Right ventricle myocardium inferior (tissue), 1 donor: ENCODE measurements at regions of chr20 and their contacts with region 1.

Region 1: DNA sequence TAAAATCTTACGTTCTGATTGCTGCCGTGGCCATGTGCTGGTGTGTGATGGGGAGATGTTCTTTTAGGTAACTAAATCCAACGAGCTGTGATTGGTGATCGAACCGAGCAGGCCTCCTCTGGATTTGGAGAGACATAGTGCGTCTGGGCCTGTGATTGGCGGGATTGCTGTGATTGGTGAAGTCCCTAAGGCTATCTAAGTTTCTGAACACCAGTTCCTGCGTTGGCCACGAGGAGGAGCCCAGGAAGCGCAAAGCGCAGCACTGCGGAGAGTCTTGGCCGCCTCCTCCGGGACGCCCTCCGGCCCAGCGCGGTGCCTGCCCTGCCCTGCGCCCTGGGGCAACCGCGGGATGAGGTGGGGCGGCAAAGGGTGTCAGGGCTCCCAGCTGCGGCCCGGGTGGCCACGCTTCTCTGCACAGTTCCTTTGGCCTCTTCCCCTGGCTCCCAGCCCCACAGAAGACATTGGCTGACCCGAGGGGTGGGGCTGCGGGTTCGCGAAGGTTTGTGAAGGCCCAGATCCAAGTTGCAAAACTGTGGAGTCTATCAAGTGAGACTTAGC is 33.0 kb downstream of the HNF4A start:
- DNase-seq: peak; percentile 77
- ATAC-seq: peak; percentile 66

Region 2: GRCh38 chr20:44204155-44204831 is 184.3 kb before region 1 on chr20:
- intact Hi-C with region 1: no loop called
- DNase-seq: no peak
- ATAC-seq: peak; percentile 53

Region 3: DNA sequence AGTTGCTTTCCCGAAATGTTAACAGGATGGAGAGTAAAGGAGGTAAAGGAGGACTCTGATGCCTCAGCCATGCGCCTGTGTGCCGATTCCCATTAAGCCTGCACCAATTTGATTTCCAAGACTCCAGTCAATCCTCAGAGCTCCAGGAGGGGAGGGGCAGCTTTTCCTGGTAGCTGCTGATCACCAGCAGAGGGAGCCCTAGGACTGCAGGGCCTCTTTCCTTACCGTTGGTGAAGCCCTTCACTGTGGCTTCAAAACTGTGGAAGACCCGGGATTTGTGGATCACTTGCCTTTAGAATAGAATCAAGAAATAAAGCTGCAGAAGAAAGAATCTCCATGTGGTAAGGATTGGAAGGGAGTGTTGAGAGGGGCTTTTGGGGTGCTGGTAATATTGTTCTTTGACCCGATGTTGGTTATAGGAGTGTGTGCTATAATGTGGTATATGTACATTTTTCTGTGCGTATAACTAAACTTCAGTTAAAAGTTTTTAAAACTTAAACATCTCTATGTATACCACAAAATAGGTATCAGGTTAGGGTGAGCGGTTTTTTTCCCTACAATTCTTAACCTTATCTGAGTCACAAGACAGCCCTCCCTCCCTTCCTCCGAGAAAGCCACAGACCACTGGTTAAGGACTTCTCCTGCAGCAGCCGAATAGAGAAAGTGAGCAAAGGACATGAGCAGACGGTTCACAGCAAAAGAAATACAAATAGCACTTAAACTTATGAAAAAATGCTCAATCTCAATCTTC is 171.0 kb before region 1 on chr20:
- intact Hi-C with region 1: loop called (anchors 1 kb)
- DNase-seq: no peak
- ATAC-seq: peak; percentile 73

Region 4: DNA sequence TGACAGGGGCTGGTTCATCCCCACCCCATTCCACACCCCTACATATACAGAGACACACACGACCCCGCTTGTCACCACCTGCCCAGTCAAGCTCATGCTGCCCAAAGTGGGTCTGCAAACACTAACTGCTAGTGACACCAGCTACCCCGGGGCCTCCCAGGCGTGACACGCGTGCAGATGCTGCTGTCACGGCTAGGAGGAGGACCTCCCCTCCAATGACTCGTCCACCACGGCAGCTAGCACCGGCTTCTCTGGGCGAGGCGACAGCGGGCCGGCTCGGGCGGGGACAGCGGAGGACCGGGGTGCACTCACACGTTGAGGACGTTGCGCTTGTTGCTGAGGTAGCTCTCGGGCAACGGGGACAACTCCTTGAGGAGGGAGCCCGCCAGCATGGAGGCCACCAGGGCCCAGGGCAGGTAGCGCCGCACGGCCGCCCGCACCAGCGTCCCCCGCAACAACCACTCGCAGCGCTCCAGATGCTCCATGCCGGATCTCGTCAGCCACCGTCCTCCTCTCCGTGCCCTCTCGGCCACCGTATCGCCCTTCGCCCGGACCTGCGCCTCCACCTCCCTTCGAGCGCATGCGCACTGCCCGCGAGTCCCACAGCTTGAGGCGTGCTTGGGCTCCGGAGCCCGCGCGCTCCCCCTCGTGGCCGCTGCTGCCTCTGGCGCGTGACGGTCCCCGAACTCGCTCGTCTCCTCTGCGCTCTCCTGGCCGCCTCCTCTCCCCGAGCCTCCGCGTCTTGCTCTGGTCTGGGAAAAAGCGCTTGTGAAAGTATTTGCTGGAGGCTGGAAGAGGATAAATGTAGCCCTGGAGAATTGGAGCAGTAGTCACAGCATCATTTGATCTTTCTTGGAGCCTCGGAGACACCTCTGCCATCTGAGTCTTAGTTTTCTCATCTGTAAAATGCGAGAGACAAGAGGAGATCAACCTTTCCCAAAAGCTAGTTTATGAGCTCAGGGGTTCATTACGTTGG is 77.6 kb before region 1 on chr20 and contains the start of gene FITM2:
- intact Hi-C with region 1: loop called (anchors 5 kb)
- DNase-seq: peak; percentile 100
- ATAC-seq: peak; percentile 86
- total RNA-seq, gene FITM2: 149 TPM

Region 5: GRCh38 chr20:44460795-44461141 is 72.2 kb after region 1 on chr20:
- intact Hi-C with region 1: loop called (anchors 2 kb)
- DNase-seq: no peak
- ATAC-seq: no peak

Region 6: GRCh38 chr20:44609511-44610312 is 221.2 kb after region 1 on chr20:
- intact Hi-C with region 1: loop called (anchors 2 kb)
- DNase-seq: peak; percentile 92
- ATAC-seq: peak; percentile 94

Region 7: DNA sequence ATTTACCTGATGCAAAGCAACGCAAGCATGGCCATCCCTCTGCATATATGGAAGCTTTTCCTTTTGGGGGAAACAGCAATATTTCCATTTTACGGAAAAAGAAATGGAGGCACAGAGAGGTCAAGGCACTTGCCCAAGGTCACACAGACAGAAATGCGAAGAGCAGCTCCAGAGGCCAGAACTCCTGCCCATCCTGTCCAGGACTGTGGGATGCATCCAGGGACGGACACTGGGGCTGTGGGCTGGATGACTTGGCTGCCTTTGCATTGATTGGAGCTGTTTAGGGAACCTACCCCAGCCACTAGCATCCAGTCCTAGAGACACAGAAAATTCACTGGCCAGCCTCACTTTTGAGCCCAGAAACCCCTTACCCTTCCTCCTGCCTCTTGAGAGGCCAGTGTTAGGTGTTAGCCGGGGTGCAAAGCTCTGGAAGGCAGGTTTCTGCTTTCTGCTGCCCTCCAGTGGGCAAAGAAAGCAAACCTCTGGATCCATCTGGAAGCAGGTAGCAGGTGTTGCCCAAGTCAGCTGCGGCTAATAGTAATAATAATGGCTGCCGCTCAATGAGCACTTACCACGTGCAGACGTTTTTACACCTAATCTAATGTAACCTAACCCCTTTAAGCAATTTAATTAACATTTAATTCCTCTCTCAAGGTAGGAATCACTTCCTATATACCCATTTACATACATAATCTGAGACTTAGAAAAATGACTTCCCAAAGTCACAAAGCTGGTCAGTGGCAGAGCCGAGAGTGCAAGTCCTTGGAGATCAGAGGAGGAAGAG is 294.9 kb after region 1 on chr20:
- intact Hi-C with region 1: loop called (anchors 2 kb)
- DNase-seq: no peak
- ATAC-seq: peak; percentile 55

Region 8: GRCh38 chr20:44733341-44734069 is 345.0 kb after region 1 on chr20:
- intact Hi-C with region 1: loop called (anchors 5 kb)
- DNase-seq: no peak
- ATAC-seq: peak; percentile 54